Aorta (tissue), 5 donors: ENCODE measurements at regions of chr12 and their contacts with region 1.

Region 1: DNA sequence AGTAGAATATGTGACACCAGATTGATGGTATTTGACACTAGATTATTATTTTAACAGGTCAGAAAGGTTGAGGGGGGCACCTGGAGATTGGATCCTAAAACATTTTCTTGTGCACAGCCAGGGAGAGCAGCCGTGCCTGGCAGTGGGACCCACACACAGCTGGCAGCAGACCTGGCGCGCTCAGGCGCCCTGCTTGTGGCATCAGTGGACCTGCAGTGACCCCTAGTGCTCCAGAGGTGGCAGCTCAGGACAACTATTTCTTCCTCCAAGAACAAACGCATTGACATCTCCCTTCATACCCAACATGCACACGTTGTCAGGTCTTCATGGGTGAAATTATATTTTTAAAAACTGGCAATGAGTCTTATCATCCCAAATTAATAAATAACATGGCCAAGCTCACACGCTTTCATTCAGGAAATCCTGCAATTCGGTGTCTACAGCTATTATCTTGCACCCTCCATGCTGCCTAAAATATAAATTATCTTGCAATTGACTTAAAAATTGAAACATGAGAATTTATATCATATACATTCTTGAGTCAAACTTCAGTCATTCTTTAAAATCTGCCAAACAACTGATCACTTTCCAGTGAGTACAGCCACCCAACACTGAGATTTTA is 7.7 kb upstream of the TMEM132D start:
- DNase-seq: no peak
- ATAC-seq: no peak
- H3K4me3 ChIP-seq: no peak overlapping the region
- H3K27ac ChIP-seq: no peak overlapping the region
- H3K4me1 ChIP-seq: no peaks in the 10 kb centered on the region
- H3K27me3 ChIP-seq: no peaks in the 10 kb centered on the region

Region 2: DNA sequence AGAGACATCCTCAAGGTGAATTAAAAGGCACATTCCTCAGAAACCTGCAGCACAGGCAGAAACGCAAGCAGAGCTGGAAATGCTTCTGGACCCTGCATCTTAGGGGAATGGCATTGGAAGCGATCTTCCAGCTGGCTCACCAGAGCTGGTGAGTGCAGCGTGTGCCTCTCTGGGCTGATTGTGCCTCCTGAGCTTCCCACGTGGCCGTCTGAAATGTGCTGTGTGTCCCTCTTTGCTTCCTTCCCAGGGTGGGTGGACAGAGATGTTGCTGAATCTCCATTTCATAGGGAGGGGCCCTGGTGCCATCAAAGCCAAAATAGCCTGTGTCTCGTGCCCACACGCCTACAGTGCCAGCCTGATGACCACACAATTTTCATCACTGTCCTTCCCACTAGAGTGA is 26.6 kb after region 1 on chr12:
- intact Hi-C with region 1: loop called in 1 of 2 experiments (anchors 2 kb)
- DNase-seq: no peak
- ATAC-seq: no peak
- H3K4me3 ChIP-seq: no peak overlapping the region
- H3K27ac ChIP-seq: no peak overlapping the region
- H3K4me1 ChIP-seq: no peaks in the 10 kb centered on the region
- H3K27me3 ChIP-seq: no peaks in the 10 kb centered on the region